Esophagus squamous epithelium (tissue), 5 donors: ENCODE measurements at regions of chr3 and their contacts with region 1.

Region 1: GRCh38 chr3:184513276-184514170 is 48.1 kb upstream of the EPHB3 start:
- DNase-seq: peak; percentile 24
- H3K4me3 ChIP-seq: peak overlapping the region; percentile 24 to 66 (median 47)
- H3K27ac ChIP-seq: peak overlapping the region in 2 of 4 donors; percentile 36 to 42
- H3K4me1 ChIP-seq: peaks cover 9 to 12% (median 11%) of the 10 kb centered on the region in 3 donors
- H3K27me3 ChIP-seq: peaks cover 0 to 79% (median 3%) of the 10 kb centered on the region in 4 donors
- CTCF ChIP-seq: peak; percentile 69 to 93 (median 86)
- POLR2A ChIP-seq: no peak

Region 2: DNA sequence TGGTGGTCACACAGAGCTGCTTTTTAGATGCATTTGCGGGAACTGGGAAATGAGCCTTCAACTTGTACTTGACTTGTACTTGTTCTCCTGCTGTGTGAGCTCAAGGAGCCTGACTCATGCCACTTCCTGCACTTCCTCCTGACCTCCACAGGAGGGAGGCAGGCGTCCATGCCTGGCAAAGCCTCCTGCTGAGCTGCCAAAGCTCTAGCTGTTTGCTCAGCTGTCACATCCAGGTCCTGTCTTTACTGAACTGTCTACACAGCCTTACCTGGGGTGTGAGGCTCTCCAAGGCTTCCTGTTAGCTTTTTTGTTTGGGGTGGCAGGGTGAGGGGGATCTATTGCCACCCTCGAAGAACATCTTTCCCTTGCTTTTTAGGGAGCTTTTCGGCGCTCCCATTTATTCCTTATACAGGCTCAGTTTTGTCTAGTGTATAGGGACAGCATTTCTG is 141.9 kb before region 1 on chr3:
- intact Hi-C with region 1: loop called (anchors 10 kb)
- DNase-seq: peak; percentile 6
- H3K4me3 ChIP-seq: no peak overlapping the region
- H3K27ac ChIP-seq: no peak overlapping the region
- H3K4me1 ChIP-seq: peaks cover 0 to 20% (median 6%) of the 10 kb centered on the region in 3 donors
- H3K27me3 ChIP-seq: peaks cover 0 to 31% (median 0%) of the 10 kb centered on the region in 4 donors
- CTCF ChIP-seq: peak; percentile 66 to 96 (median 92)
- POLR2A ChIP-seq: no peak

Region 3: GRCh38 chr3:184417619-184418327 is 95.8 kb before region 1 on chr3:
- intact Hi-C with region 1: loop called (anchors 10 kb)
- DNase-seq: no peak
- H3K4me3 ChIP-seq: no peak overlapping the region
- H3K27ac ChIP-seq: no peak overlapping the region
- H3K4me1 ChIP-seq: peaks cover 0 to 6% (median 0%) of the 10 kb centered on the region in 3 donors
- H3K27me3 ChIP-seq: no peaks in the 10 kb centered on the region
- CTCF ChIP-seq: peak; percentile 59 to 98 (median 92)
- POLR2A ChIP-seq: no peak

Region 4: GRCh38 chr3:184428561-184429175 is 84.9 kb before region 1 on chr3:
- intact Hi-C with region 1: no loop called
- DNase-seq: no peak
- H3K4me3 ChIP-seq: no peak overlapping the region
- H3K27ac ChIP-seq: no peak overlapping the region
- H3K4me1 ChIP-seq: peaks cover 0 to 11% (median 0%) of the 10 kb centered on the region in 3 donors
- H3K27me3 ChIP-seq: no peaks in the 10 kb centered on the region
- CTCF ChIP-seq: no peak
- POLR2A ChIP-seq: no peak

Region 5: DNA sequence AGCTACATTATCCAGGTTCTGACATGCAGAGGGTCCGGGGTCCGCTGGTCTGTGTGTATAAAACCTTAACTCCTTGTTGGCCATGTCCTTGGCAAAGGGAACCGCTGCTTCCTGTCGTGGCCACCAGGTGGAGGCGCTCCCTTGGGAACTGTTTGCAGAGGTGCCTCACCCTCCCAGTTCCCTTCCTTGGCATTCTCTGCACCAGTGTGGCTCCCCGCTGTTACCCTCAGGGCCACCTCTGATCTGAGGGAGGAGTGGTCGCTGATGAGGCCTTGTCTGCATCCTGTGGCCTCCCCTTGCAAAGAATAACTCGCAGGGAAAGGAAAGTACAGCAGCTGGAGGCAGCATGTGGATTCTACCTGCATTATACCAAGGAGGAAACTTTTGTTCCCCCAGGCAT is 44.1 kb before region 1 on chr3:
- intact Hi-C with region 1: loop called (anchors 10 kb)
- DNase-seq: no peak
- H3K4me3 ChIP-seq: no peak overlapping the region
- H3K27ac ChIP-seq: no peak overlapping the region
- H3K4me1 ChIP-seq: peaks cover 3 to 12% (median 8%) of the 10 kb centered on the region in 3 donors
- H3K27me3 ChIP-seq: peaks cover 0 to 19% (median 0%) of the 10 kb centered on the region in 4 donors
- CTCF ChIP-seq: peak in 5 of 6 experiments; percentile 65 to 93 (median 75)
- POLR2A ChIP-seq: no peak